B cell (primary cell): ENCODE measurements at regions of chr2 and their contacts with region 1.

Region 1: DNA sequence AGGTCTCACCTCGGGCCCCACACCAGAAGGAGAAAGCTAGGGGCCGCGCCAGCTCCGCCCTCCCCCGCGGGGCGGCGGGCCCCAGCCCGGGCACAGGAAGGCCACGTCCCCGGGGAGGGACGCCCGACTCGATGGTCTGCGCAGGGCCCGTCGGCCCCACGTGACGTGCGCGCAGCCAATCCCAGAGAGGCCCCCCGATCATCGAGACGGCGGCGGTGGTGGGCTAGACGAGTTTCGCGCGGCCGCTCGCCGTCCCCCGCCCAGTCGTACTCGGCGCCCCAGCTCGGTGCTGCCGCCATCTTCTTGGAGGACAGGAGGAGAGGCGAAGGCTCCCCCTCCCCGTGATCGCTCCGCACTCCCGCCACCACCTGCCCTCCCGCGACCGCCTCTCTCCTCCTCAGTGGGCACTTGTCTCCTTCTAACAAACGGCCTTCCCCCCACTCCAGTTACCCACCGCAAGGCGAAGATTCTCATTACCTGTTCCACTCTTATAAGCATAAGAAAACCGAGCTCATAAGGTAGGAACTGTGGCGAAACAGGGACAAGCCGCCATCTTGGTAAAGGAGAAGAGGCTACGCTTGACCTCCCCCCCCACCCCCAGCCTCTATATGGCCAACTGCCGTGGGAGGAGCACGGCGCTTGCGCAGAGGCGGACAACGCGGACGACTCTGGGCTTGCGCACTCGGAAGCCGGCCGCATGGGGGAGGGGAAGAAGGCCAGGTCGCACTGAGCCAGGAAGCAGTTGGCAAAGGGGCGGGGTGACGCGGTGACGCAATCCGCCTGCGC is at the start of gene HDLBP:
- DNase-seq: peak; percentile 100
- ATAC-seq: peak; percentile 69
- H3K4me3 ChIP-seq: peak within 1 kb of the TSS; percentile 90 to 99 (median 91)
- H3K4me3 Mint-ChIP-seq: peak within 1 kb of the TSS; percentile 95
- H3K27ac ChIP-seq: peak within 1 kb of the TSS; percentile 98 to 99
- H3K27ac Mint-ChIP-seq: peak within 1 kb of the TSS; percentile 99
- H3K4me1 ChIP-seq: peaks cover 43 to 47% of the 10 kb centered on the region in 2 donors
- H3K4me1 Mint-ChIP-seq: peaks cover 72% of the 10 kb centered on the region
- H3K27me3 ChIP-seq: no peaks in the 10 kb centered on the region
- H3K27me3 Mint-ChIP-seq: no peaks in the 10 kb centered on the region
- CTCF ChIP-seq: peak; percentile 39
- total RNA-seq, gene HDLBP: 127 and 153 TPM in 2 replicates

Region 2: GRCh38 chr2:241102239-241102803 is 213.0 kb before region 1 on chr2 and contains the start of gene MTERF4:
- CTCF ChIA-PET with region 1: no interaction called
- POLR2A ChIA-PET with region 1: no interaction called
- intact Hi-C with region 1: loop called (anchors 5 kb)
- DNase-seq: peak; percentile 93
- ATAC-seq: peak; percentile 91
- H3K4me3 ChIP-seq: peak within 1 kb of the TSS; percentile 73 to 95 (median 93)
- H3K4me3 Mint-ChIP-seq: peak within 1 kb of the TSS; percentile 98
- H3K27ac ChIP-seq: peak within 1 kb of the TSS; percentile 88 to 89
- H3K27ac Mint-ChIP-seq: peak within 1 kb of the TSS; percentile 97
- H3K4me1 ChIP-seq: peaks cover 43 to 56% of the 10 kb centered on the region in 2 donors
- H3K4me1 Mint-ChIP-seq: peaks cover 49% of the 10 kb centered on the region
- H3K27me3 ChIP-seq: no peaks in the 10 kb centered on the region
- H3K27me3 Mint-ChIP-seq: no peaks in the 10 kb centered on the region
- CTCF ChIP-seq: no peak
- total RNA-seq, gene MTERF4: 153 and 159 TPM in 2 replicates

Region 3: DNA sequence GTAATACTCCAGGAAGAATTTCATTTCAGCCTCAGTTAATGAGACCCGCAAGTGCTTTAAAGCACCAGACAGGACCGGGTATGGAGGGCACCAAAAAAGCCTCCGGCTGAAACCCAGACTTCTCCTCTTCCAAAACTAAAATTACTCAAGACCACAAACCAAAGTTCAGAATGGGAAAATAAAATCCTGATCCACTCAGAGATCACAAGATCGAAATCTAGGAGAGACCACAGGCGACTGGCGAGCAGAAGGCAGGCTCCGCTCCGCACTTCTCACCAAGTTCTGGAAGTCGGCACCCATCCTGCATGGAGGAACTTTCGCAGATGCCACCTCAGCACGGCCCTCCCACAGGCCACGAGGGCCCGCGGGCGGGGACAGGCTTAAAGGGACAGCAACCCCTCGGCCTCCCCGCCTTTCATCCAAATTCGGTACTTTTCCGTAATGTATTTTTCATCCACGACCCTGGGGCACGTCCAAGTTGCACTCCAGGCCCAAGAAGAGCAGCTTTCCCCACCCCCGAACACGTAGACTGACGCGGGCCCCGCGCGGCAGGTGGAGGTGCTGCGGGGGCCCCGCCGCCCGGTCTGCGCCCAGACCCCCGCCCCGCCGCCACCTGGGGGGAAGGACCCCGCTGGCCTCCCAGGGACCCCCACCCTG is 43.5 kb before region 1 on chr2:
- CTCF ChIA-PET with region 1: interaction called, 6 read pairs
- POLR2A ChIA-PET with region 1: interaction called, 3 read pairs
- intact Hi-C with region 1: loop called (anchors 1 kb)
- DNase-seq: peak; percentile 68
- ATAC-seq: peak; percentile 70
- H3K4me3 ChIP-seq: peak overlapping the region; percentile 62 to 81 (median 67)
- H3K4me3 Mint-ChIP-seq: peak overlapping the region; percentile 98
- H3K27ac ChIP-seq: peak overlapping the region; percentile 21 to 40
- H3K27ac Mint-ChIP-seq: peak overlapping the region; percentile 92
- H3K4me1 ChIP-seq: peaks cover 12 to 21% of the 10 kb centered on the region in 2 donors
- H3K4me1 Mint-ChIP-seq: peaks cover 31% of the 10 kb centered on the region
- H3K27me3 ChIP-seq: no peaks in the 10 kb centered on the region
- H3K27me3 Mint-ChIP-seq: no peaks in the 10 kb centered on the region
- CTCF ChIP-seq: no peak

Region 4: DNA sequence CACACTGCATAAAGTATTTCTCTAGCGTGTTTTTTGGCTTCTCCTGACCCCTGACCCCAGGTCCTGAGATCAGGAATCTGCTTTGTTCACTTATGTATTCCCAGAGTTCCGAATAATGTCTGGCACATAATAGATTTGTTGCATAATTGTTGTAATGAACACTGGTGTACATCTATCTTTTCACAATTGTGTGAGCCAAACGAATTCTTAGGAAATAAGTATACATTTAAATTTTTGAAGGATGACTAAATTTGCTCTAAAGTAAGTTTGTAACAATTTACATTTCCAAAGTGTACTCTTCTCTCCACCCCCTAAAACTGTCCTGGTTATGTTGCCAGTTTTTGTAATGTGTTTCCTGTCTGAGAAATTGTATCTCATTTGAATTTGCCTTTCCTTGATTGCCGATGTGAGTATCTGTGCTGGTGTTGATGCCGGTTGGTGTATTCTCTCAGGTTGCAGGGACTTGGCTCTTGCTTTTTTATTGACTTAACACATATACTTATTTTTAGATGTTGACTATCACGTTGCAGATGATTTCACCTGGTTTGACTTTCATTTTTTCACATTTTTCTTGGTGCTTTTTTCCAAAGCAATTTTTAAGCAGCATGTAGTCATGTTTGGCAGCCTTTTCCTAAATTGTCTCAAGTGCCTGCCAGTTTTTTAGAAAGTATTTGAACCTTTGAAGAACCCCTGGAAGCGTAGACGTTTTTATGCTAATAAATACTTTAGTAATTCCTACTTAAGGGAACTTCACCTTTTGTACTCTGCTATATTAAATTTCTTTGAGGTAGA is 24.7 kb after region 1 on chr2:
- CTCF ChIA-PET with region 1: no interaction called
- POLR2A ChIA-PET with region 1: interaction called, 5 read pairs
- intact Hi-C with region 1: loop called (anchors 1 kb)
- DNase-seq: no peak
- ATAC-seq: no peak
- H3K4me3 ChIP-seq: no peak overlapping the region
- H3K4me3 Mint-ChIP-seq: no peak overlapping the region
- H3K27ac ChIP-seq: no peak overlapping the region
- H3K27ac Mint-ChIP-seq: no peak overlapping the region
- H3K4me1 ChIP-seq: peaks cover 10 to 15% of the 10 kb centered on the region in 2 donors
- H3K4me1 Mint-ChIP-seq: peaks cover 18% of the 10 kb centered on the region
- H3K27me3 ChIP-seq: no peaks in the 10 kb centered on the region
- H3K27me3 Mint-ChIP-seq: no peaks in the 10 kb centered on the region
- CTCF ChIP-seq: no peak

Region 5: DNA sequence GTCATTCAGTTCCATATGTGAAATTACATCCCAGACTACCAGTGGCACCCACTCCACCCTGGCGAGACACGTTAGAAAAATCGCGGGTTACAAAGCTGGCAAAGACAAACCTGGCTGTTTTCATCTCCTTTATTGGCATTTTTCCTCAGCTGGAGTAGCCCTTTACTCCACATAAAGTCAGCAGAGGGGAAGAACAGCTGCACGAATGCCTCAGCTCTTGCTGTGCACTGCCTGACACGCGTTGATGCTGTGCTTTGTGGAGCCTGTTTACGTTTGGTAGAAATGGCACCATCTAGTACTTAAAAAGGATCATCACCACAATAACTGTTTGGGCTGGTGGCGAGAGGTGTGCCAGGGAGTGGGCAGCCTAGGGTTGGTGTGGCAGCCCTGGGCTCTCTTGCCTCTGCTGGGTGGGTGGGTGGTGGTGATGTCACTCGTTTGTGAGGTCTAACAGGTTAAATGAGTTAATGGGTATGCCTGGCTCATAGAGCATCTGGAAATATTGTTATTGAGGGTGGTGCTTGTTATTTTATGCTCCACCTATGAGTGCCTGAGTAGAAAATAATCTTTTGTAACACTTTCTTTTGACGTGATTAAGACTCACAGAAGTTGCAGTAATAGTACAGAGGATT is 57.2 kb after region 1 on chr2:
- CTCF ChIA-PET with region 1: no interaction called
- POLR2A ChIA-PET with region 1: no interaction called
- intact Hi-C with region 1: no loop called
- DNase-seq: no peak
- ATAC-seq: no peak
- H3K4me3 ChIP-seq: no peak overlapping the region
- H3K4me3 Mint-ChIP-seq: peak overlapping the region; percentile 23
- H3K27ac ChIP-seq: no peak overlapping the region
- H3K27ac Mint-ChIP-seq: peak overlapping the region; percentile 64
- H3K4me1 ChIP-seq: peaks cover 27 to 47% of the 10 kb centered on the region in 2 donors
- H3K4me1 Mint-ChIP-seq: peaks cover 58% of the 10 kb centered on the region
- H3K27me3 ChIP-seq: no peaks in the 10 kb centered on the region
- H3K27me3 Mint-ChIP-seq: no peaks in the 10 kb centered on the region
- CTCF ChIP-seq: no peak

Region 6: DNA sequence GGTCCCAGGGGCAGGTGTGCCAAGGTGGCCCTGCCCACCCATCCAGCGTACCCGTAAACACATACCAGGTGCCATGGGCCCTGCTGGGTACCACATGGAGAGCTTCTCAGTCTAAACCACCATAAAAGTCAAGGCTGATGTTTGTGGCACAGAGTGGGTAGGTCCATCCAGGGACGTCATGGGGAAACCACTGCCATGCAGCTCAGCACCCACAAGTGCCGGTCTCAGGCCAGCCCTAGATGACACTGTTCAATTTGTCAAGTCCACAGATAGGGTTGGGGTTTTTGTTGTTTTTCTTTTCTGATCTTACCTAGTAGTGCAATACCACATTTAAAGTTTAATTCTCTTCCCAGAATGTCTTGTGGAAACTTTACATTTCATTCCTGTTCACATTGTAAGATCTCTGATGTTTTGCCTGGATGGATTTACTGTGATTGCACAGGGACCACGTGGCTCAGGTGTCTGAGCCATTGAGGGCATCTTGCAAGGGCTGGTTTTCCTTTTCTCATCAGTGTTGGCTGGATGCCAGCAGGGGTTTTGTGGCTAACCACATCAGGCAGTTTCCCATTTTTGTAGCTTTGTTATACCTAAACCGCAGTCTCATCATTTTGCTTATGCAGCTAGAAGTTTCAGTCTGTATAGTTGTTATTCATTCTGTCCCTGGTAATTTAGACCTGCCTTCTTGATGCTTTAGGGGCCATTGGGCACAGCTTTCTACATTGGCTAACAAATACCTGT is 128.4 kb after region 1 on chr2:
- CTCF ChIA-PET with region 1: no interaction called
- POLR2A ChIA-PET with region 1: no interaction called
- intact Hi-C with region 1: no loop called
- DNase-seq: peak; percentile 79
- ATAC-seq: peak; percentile 62
- H3K4me3 ChIP-seq: no peak overlapping the region
- H3K4me3 Mint-ChIP-seq: peak overlapping the region; percentile 2
- H3K27ac ChIP-seq: no peak overlapping the region
- H3K27ac Mint-ChIP-seq: peak overlapping the region; percentile 74
- H3K4me1 ChIP-seq: peaks cover 13 to 17% of the 10 kb centered on the region in 2 donors
- H3K4me1 Mint-ChIP-seq: peaks cover 14% of the 10 kb centered on the region
- H3K27me3 ChIP-seq: peaks cover 0 to 10% (median 5%) of the 10 kb centered on the region in 4 experiments
- H3K27me3 Mint-ChIP-seq: no peaks in the 10 kb centered on the region
- CTCF ChIP-seq: no peak

Region 7: DNA sequence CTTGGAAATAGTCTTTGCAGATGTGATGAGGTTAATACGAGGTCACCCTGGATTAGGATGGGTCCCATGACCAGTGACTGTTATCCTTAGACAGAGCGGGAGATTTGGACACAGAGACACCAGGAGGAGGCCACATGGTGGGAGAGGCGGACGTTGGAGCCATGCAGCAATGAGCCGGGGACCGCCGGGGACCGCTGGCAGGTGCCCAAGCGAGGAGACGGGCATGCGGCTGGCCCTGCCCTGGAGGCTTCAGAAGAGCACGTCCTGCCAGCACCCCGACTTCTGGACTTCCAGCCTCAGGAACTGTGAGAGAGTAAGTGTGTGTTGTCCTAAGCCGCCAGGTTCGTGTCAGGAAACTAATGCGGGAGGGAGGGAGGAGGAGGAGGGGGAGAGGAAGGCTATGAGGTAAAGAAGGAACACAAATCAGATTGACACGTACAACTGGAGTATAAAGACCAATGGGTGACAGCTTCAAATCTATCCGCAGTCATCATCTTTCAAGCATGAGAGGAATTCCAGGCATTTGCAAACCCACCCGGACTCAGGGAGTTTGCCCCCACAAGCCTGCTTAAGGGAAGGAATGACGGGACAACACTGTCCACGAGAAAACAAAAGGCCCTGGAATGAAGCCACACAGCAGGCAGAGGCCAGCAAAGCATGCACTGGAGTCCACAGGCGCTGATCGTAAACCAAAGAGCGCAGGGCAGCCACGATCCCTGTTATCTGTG is 231.6 kb after region 1 on chr2:
- CTCF ChIA-PET with region 1: no interaction called
- POLR2A ChIA-PET with region 1: no interaction called
- intact Hi-C with region 1: no loop called
- DNase-seq: no peak
- ATAC-seq: no peak
- H3K4me3 ChIP-seq: no peak overlapping the region
- H3K4me3 Mint-ChIP-seq: no peak overlapping the region
- H3K27ac ChIP-seq: no peak overlapping the region
- H3K27ac Mint-ChIP-seq: no peak overlapping the region
- H3K4me1 ChIP-seq: no peaks in the 10 kb centered on the region
- H3K4me1 Mint-ChIP-seq: no peaks in the 10 kb centered on the region
- H3K27me3 ChIP-seq: peaks cover 0 to 51% (median 11%) of the 10 kb centered on the region in 4 experiments
- H3K27me3 Mint-ChIP-seq: peaks cover 26% of the 10 kb centered on the region
- CTCF ChIP-seq: no peak

Region 8: GRCh38 chr2:241609859-241610793 is 294.8 kb after region 1 on chr2:
- CTCF ChIA-PET with region 1: no interaction called
- POLR2A ChIA-PET with region 1: no interaction called
- intact Hi-C with region 1: loop called (anchors 1 kb)
- DNase-seq: peak; percentile 93
- ATAC-seq: peak; percentile 99
- H3K4me3 ChIP-seq: peak overlapping the region in 4 of 5 experiments; percentile 50 to 71 (median 62)
- H3K4me3 Mint-ChIP-seq: peak overlapping the region; percentile 66
- H3K27ac ChIP-seq: peak overlapping the region; percentile 50 to 74
- H3K27ac Mint-ChIP-seq: peak overlapping the region; percentile 63
- H3K4me1 ChIP-seq: peaks cover 8 to 16% of the 10 kb centered on the region in 2 donors
- H3K4me1 Mint-ChIP-seq: peaks cover 20% of the 10 kb centered on the region
- H3K27me3 ChIP-seq: no peaks in the 10 kb centered on the region
- H3K27me3 Mint-ChIP-seq: no peaks in the 10 kb centered on the region
- CTCF ChIP-seq: peak; percentile 76

Region 9: GRCh38 chr2:241686649-241687425 is 371.6 kb after region 1 on chr2 and contains the start of gene DTYMK:
- CTCF ChIA-PET with region 1: no interaction called
- POLR2A ChIA-PET with region 1: no interaction called
- intact Hi-C with region 1: loop called (anchors 1 kb)
- DNase-seq: peak; percentile 97
- ATAC-seq: peak; percentile 95
- H3K4me3 ChIP-seq: peak within 1 kb of the TSS; percentile 71 to 91 (median 82)
- H3K4me3 Mint-ChIP-seq: peak within 1 kb of the TSS; percentile 84
- H3K27ac ChIP-seq: peak within 1 kb of the TSS; percentile 61 to 91
- H3K27ac Mint-ChIP-seq: peak within 1 kb of the TSS; percentile 68
- H3K4me1 ChIP-seq: peaks cover 8 to 19% of the 10 kb centered on the region in 2 donors
- H3K4me1 Mint-ChIP-seq: peaks cover 26% of the 10 kb centered on the region
- H3K27me3 ChIP-seq: no peaks in the 10 kb centered on the region
- H3K27me3 Mint-ChIP-seq: no peaks in the 10 kb centered on the region
- CTCF ChIP-seq: no peak
- total RNA-seq, gene DTYMK: 20.7 and 26.3 TPM in 2 replicates